B cell (primary cell): ENCODE measurements at regions of chr15 and their contacts with region 1.

Region 1: DNA sequence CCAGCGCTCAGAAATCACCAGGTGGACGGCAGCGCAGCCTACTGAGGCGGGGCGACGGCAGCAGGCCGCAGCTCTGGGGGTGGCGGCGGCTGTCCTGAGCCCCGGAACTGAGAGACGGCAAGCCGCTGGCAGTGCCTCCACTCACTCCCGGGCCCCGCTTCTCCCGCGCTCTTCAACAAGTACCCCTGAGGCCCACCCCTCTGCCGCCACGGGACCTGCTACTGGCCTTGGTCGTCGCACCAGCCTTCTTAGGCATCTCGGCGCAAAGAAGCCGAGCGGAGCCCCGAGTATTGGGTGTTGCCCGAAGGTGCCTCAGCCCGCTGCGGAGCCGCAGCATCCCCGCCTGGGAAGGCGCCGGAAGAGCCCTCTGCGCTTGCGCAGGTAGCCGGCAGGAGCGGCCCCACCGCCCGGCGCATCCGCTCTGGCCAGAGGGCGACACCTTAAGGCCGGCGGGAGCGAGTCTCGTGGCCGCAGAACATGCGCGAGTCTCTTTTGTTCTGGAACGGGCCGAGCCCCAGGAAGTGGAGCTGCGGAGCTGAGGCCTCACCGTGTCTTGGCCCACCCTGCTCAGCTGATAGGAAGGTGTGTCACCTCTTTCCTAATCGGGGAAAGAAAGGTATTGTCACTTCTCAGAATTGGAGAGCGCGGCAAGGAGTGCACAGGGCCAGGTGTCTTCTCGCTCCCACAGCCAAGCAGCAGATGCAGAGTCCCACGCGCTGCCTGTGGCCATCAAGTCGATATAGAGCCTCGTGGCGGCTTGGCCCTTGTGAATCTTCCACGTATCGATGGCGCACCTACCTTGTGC is at the start of gene C15orf40:
- DNase-seq: peak; percentile 94
- ATAC-seq: peak; percentile 91
- H3K4me3 ChIP-seq: peak within 1 kb of the TSS; percentile 90 to 99 (median 92)
- H3K4me3 Mint-ChIP-seq: peak within 1 kb of the TSS; percentile 96
- H3K27ac ChIP-seq: peak within 1 kb of the TSS; percentile 69 to 83
- H3K27ac Mint-ChIP-seq: peak within 1 kb of the TSS; percentile 92
- H3K4me1 ChIP-seq: peaks cover 22 to 24% of the 10 kb centered on the region in 2 donors
- H3K4me1 Mint-ChIP-seq: peaks cover 50% of the 10 kb centered on the region
- H3K27me3 ChIP-seq: no peaks in the 10 kb centered on the region
- H3K27me3 Mint-ChIP-seq: no peaks in the 10 kb centered on the region
- CTCF ChIP-seq: no peak
- total RNA-seq, gene C15orf40: 39.5 and 40.7 TPM in 2 replicates

Region 2: DNA sequence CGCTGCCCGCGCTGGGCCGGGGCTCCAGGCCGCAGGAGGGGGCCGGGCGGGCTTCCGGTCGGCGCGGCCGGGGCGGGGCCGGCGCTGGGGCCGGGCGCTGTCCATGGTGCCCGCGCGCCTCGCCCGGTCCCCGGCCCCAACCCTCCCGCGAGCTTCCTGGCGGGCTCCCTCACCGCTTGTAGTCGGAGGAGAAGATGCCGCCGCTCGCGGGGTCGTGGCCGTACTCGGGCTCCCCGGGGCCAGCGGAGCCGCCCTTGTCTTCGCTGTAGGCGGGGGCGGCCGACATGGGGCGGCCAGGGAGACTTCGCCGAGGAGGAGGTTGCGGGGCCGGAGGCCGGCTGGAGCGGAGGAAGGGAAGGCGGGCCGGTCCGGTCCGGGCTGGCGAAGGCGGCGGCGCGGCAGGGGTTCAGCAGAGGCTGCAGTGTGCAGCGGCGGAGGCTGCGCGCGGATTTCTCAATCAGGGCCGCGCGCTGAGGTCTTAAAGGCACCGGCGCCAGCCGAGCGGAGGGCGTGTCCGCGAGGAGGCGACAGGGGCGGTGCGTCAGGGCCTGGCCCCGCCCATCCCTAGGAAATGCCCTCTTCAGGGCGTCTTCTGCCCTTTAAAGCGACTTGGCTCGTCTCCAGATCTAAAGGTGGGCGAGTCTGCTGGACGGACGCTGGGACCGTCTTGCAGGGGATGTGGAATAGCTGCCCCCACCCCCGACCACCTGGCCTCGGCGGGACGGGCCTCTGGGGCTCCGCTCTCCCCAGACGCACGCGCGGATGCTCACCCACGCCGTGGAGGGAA is 301.9 kb before region 1 on chr15 and contains the start of gene AP3B2:
- CTCF ChIA-PET with region 1: no interaction called
- POLR2A ChIA-PET with region 1: no interaction called
- intact Hi-C with region 1: loop called (anchors 2 kb)
- DNase-seq: peak; percentile 78
- ATAC-seq: peak; percentile 88
- H3K4me3 ChIP-seq: peak within 1 kb of the TSS in 4 of 5 experiments; percentile 38 to 72 (median 60)
- H3K4me3 Mint-ChIP-seq: peak within 1 kb of the TSS; percentile 77
- H3K27ac ChIP-seq: no peak within 1 kb of the TSS
- H3K27ac Mint-ChIP-seq: no peak within 1 kb of the TSS
- H3K4me1 ChIP-seq: peaks cover 0 to 12% of the 10 kb centered on the region in 2 donors
- H3K4me1 Mint-ChIP-seq: peaks cover 2% of the 10 kb centered on the region
- H3K27me3 ChIP-seq: peaks cover 0 to 45% (median 5%) of the 10 kb centered on the region in 4 experiments
- H3K27me3 Mint-ChIP-seq: peaks cover 30% of the 10 kb centered on the region
- CTCF ChIP-seq: no peak
- total RNA-seq, gene AP3B2: 0.15 and 0.61 TPM in 2 replicates

Region 3: DNA sequence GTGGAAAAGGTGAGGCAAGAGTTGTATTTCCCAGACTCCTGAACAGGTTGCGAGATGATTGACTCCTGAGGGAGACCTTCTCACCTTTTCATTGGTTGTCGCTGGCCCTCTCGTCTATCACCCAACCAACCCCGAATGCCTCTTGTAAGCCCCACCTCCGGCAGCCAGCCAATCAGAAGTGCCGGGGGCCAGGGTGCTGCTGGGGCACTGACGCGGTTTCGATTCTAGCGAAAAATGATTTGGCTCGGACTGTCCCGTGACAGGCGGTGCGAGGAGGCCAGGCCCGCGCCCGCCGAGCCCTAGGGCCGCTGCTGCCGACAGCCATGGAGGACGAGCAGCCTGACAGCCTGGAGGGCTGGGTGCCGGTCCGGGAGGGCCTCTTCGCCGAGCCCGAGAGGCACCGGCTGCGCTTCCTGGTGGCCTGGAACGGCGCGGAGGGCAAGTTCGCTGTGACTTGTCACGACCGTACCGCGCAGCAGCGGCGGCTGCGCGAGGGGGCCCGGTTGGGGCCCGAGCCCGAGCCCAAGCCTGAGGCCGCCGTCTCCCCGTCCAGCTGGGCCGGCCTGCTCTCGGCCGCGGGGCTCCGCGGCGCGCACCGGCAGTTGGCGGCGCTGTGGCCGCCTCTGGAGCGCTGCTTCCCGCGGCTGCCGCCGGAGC is 201.9 kb before region 1 on chr15 and contains the start of gene WHAMM:
- CTCF ChIA-PET with region 1: interaction called, 5 read pairs
- POLR2A ChIA-PET with region 1: no interaction called
- intact Hi-C with region 1: loop called (anchors 1 kb)
- DNase-seq: peak; percentile 97
- ATAC-seq: peak; percentile 89
- H3K4me3 ChIP-seq: peak within 1 kb of the TSS; percentile 82 to 96 (median 86)
- H3K4me3 Mint-ChIP-seq: peak within 1 kb of the TSS; percentile 86
- H3K27ac ChIP-seq: peak within 1 kb of the TSS; percentile 91 to 99
- H3K27ac Mint-ChIP-seq: peak within 1 kb of the TSS; percentile 95
- H3K4me1 ChIP-seq: peaks cover 31 to 41% of the 10 kb centered on the region in 2 donors
- H3K4me1 Mint-ChIP-seq: peaks cover 54% of the 10 kb centered on the region
- H3K27me3 ChIP-seq: no peaks in the 10 kb centered on the region
- H3K27me3 Mint-ChIP-seq: no peaks in the 10 kb centered on the region
- CTCF ChIP-seq: no peak
- total RNA-seq, gene WHAMM: 29.9 and 31.3 TPM in 2 replicates

Region 4: DNA sequence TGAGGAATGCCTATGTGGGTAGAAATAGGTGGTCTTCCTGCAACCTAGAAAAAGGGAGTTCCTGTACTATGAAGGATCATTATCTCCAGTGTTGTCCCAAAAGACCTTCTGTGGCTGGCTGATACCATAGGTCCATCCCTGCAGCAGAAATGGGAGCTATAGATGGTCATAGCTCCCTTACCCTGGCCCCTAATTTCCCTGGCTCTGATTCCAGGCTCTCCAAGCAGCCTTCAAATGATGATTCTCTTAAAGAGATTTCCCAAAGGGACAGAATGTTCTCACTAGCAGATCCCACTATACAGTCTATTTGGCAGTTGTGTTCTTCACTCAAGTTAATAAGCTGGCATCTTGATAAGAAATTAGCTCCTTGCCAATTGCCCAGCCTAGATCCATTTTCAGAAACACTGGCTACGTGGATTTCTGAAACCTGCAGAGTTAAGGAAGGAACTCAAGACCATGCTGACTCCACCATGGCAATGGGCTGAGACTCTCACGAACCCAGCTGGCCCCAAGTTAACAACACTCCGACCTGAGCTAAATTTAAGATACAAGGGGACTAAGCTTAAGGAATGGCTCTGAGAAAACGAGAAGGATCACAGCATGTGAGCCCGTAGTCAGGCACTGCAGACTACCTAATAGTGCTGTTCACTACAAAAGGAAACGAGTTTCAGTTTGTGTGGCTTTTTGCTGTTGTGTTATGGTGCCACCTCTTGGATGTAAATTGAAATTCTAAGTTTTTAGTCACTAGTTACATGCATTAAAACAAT is 11.4 kb before region 1 on chr15:
- CTCF ChIA-PET with region 1: interaction called, 16 read pairs
- POLR2A ChIA-PET with region 1: no interaction called
- intact Hi-C with region 1: no loop called
- DNase-seq: peak; percentile 68
- ATAC-seq: peak; percentile 83
- H3K4me3 ChIP-seq: peak overlapping the region in 3 of 5 experiments; percentile 29 to 44 (median 40)
- H3K4me3 Mint-ChIP-seq: peak overlapping the region; percentile 88
- H3K27ac ChIP-seq: peak overlapping the region in 1 of 2 donors; percentile 62
- H3K27ac Mint-ChIP-seq: peak overlapping the region; percentile 91
- H3K4me1 ChIP-seq: peaks cover 6 to 8% of the 10 kb centered on the region in 2 donors
- H3K4me1 Mint-ChIP-seq: peaks cover 7% of the 10 kb centered on the region
- H3K27me3 ChIP-seq: no peaks in the 10 kb centered on the region
- H3K27me3 Mint-ChIP-seq: no peaks in the 10 kb centered on the region
- CTCF ChIP-seq: peak; percentile 72